Activated CD4-positive, alpha-beta memory T cell treated with anti-CD3 and anti-CD28 coated beads for 36 hours (primary cell): ENCODE measurements at regions of chr9 and their contacts with region 1.

Region 1: DNA sequence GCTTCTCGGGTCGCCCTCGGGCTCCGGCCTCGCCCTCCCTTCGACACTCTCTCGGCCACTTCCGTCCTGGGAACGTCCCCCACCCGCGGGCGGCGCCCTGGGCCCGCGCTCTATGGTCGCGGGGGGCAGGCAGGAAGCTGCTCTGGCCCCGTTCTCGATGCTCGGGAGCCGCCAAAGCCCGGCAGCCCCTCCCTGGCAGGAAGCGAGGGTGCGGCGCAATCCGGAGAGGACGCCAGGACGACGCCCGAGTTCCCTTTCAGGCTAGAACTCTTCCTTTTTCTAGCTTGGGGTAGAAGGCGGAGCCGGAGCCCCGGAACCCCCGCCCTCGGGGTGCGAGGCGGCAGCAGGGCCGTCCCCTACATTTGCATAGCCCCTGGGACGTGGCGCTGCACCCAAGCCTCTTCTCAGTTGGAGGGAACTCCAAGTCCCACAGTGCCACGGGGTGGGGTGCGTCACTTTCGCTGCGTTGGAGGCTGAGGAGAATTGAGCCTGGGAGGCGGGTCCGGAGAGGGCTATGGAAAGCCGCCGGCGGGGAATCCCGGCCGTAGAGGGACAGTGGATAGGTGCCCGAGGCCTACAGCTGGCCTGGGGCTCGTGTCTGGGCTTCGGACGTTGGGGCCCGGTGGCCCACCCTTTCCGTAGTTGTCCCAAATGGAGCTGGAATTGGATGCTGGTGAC is at the starts of genes CREB3 and TLN1:
- DNase-seq: peak; percentile 99
- H3K4me3 Mint-ChIP-seq: no peak within 1 kb of the TSS
- H3K27ac Mint-ChIP-seq: no peak within 1 kb of the TSS
- H3K4me1 Mint-ChIP-seq: peaks cover 22% of the 10 kb centered on the region
- H3K27me3 Mint-ChIP-seq: no peaks in the 10 kb centered on the region
- total RNA-seq, gene CREB3: 27.7 to 29.9 TPM
- total RNA-seq, gene TLN1: 285 to 287 TPM

Region 2: DNA sequence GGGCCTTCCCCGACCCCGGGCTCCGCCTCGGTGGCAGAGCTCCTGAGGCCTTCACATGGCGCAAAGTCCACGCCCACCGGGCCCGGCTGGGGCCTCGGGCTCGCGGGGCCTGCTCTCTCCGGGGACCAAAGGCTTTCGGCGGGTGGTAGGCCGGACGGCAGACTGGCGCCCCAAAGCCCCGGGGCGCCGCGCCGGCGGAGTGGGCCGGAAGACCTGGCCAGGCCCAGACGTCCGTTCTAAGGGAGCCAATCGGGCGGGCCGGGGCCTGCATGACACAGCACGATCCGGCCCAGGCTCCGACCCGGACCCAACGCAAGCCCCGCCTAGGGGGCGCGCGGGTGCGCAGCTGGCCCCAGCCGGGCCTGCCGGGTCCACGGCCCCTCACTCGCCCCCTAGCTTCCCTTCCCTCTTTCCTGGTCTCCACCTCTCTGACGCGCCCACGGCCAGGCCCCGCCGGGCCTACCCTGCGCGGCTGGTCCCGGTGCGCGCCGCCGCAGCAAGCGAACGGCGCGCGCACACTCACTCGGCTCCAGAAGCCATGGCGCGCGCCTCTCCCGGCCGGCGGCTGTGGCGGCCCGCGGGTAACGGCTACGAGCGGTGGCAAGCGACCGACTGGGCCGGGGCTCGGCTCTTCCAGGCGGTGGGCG is 660.3 kb before region 1 on chr9:
- CTCF ChIA-PET with region 1: no interaction called
- POLR2A ChIA-PET with region 1: no interaction called
- intact Hi-C with region 1: loop called (anchors 10 kb)
- DNase-seq: peak; percentile 81
- H3K4me3 Mint-ChIP-seq: peak overlapping the region; percentile 92
- H3K27ac Mint-ChIP-seq: peak overlapping the region; percentile 99
- H3K4me1 Mint-ChIP-seq: peaks cover 54% of the 10 kb centered on the region
- H3K27me3 Mint-ChIP-seq: peaks cover 2% of the 10 kb centered on the region

Region 3: DNA sequence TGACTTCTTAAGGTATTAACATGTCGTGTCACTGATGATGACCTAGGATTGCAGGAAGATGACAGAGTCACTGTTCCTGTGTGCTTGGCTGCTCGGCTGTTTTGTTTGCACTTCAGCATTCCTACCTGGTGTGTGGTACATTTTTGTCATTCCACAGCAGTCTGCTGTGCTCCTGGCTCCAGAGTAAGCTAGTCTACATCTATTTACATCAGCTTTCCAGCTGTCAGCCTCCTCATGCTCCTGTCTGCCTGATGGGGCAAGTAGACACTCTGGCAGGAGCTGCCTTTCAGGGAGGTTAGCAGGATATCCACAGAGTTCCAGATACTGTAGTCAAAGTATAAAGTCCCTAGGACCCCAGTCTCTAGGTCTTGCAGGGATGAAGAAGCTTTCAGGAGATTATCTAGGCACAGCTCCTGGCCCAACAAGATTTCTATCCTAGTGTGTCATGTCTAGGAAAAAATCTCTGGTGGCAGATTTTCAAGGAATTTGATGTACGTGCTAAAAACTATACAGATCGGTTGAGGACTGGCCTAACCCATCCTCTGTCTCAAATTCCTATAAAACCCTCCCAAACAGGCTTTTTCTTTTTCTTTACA is 213.9 kb before region 1 on chr9:
- CTCF ChIA-PET with region 1: no interaction called
- POLR2A ChIA-PET with region 1: no interaction called
- intact Hi-C with region 1: no loop called
- DNase-seq: no peak
- H3K4me3 Mint-ChIP-seq: no peak overlapping the region
- H3K27ac Mint-ChIP-seq: no peak overlapping the region
- H3K4me1 Mint-ChIP-seq: no peaks in the 10 kb centered on the region
- H3K27me3 Mint-ChIP-seq: no peaks in the 10 kb centered on the region

Region 4: GRCh38 chr9:35657546-35658136 is 74.6 kb before region 1 on chr9 and contains the start of gene RMRP:
- CTCF ChIA-PET with region 1: interaction called, 101 read pairs
- POLR2A ChIA-PET with region 1: interaction called, 20 read pairs
- intact Hi-C with region 1: loop called (anchors 1 kb)
- DNase-seq: peak; percentile 96
- H3K4me3 Mint-ChIP-seq: peak within 1 kb of the TSS; percentile 86
- H3K27ac Mint-ChIP-seq: peak within 1 kb of the TSS; percentile 96
- H3K4me1 Mint-ChIP-seq: peaks cover 64% of the 10 kb centered on the region
- H3K27me3 Mint-ChIP-seq: peaks cover 2% of the 10 kb centered on the region
- total RNA-seq, gene RMRP: 10,694 to 13,592 TPM

Region 5: GRCh38 chr9:35748858-35749514 is 16.7 kb after region 1 on chr9 and contains the starts of genes GBA2 and RGP1:
- CTCF ChIA-PET with region 1: interaction called, 82 read pairs
- POLR2A ChIA-PET with region 1: interaction called, 20 read pairs
- intact Hi-C with region 1: loop called (anchors 1 kb)
- DNase-seq: peak; percentile 82
- H3K4me3 Mint-ChIP-seq: peak within 1 kb of the TSS; percentile 93
- H3K27ac Mint-ChIP-seq: peak within 1 kb of the TSS; percentile 88
- H3K4me1 Mint-ChIP-seq: peaks cover 37% of the 10 kb centered on the region
- H3K27me3 Mint-ChIP-seq: no peaks in the 10 kb centered on the region
- total RNA-seq, gene GBA2: 30.4 to 30.7 TPM
- total RNA-seq, gene RGP1: 17.4 to 18.0 TPM

Region 6: DNA sequence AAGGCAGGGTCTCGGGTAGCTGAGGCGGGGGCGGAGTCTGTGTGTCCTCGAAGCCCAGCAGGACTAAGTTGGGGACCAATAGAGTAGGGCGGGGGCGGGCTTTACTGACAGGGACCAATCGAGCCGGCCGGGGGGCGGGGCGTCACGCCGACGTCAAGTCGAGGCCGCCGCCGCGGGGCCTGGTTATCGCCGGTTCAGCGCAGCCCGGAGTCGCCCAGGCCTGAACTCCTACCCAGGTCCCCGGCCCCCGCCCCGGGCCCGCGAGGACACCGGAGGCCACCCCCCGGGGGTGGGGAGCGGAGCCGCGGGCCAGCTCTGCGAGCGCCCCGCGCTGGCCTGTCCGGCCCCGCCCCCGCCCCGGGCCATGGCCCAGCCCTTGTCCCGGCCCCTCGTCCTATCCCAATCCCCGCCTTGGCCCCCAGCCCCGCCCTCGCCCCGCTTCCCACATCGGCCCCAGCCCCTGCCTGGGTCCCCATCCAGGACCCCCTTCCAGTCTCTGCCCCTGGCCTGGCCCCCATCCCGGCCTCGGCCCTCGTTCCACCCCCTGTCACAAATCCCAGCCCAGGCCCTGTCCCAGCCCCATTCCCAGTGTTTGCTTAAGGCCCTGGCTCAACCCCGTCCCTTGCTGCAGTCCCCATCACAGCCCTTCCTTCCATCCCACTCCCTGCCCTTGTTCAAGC is 97.0 kb after region 1 on chr9 and contains the start of gene TMEM8B:
- CTCF ChIA-PET with region 1: interaction called, 4 read pairs
- POLR2A ChIA-PET with region 1: no interaction called
- intact Hi-C with region 1: loop called (anchors 2 kb)
- DNase-seq: peak; percentile 96
- H3K4me3 Mint-ChIP-seq: peak within 1 kb of the TSS; percentile 91
- H3K27ac Mint-ChIP-seq: peak within 1 kb of the TSS; percentile 60
- H3K4me1 Mint-ChIP-seq: peaks cover 23% of the 10 kb centered on the region
- H3K27me3 Mint-ChIP-seq: no peaks in the 10 kb centered on the region
- total RNA-seq, gene TMEM8B: 5.9 to 6.0 TPM